ENCODE measurements at regions of chr2 and their contacts with region 1.

Region 1: DNA sequence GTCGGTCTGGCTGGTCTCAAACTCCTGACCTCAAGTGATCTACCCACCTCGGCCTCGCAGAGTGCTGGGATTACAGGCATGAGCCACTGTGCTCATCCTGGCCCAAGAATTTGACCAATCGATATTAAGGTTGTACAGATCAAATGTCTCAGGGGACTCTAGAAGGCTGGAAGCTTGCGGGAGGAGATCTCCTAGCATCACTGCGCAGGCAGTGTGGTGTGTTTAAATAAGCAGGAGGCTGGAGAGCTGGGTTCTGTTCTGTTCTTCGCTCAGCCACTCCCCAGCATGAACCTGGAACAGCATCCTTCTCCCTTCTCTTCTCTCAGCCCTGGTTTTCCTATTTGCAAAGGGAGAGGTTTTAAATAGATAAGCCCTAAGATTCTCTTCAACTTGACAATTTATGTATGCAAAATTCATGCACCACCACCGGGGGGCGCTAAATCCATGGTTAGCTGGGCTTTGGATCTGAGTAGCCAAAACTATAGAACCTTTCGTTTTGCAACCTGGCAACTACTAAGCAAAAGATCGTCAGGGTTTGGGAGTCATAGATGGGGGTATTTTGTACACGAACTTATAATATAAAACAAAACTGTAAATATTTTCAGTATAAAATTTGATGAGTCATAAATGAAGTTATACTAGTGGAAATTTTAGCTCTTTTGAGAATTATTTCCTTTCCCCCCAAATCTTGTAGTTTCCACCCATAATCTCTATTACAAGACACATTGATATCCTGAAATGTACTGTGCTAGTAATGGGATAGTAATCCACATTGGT is 60.6 kb downstream of the SLC16A14 start:
- DNase-seq: no peak
- H3K4me3 ChIP-seq: peak overlapping the region in 2 of 4 donors; percentile 16 to 39
- H3K27ac ChIP-seq: no peak overlapping the region
- H3K4me1 ChIP-seq: peaks cover 0 to 6% (median 3%) of the 10 kb centered on the region in 4 donors
- H3K27me3 ChIP-seq: no peaks in the 10 kb centered on the region
- CTCF ChIP-seq: peak; percentile 70 to 82 (median 73)
- EP300 ChIP-seq: no peak
- POLR2A ChIP-seq: no peak

Region 2: GRCh38 chr2:230160112-230160660 is 152.1 kb after region 1 on chr2:
- intact Hi-C with region 1: loop called (anchors 2 kb)
- DNase-seq: no peak
- H3K4me3 ChIP-seq: no peak overlapping the region
- H3K27ac ChIP-seq: no peak overlapping the region
- H3K4me1 ChIP-seq: peaks cover 0 to 6% (median 2%) of the 10 kb centered on the region in 4 donors
- H3K27me3 ChIP-seq: no peaks in the 10 kb centered on the region
- CTCF ChIP-seq: peak; percentile 59 to 74 (median 71)
- EP300 ChIP-seq: no peak
- POLR2A ChIP-seq: no peak

Region 3: GRCh38 chr2:230614913-230615332 is 606.8 kb after region 1 on chr2:
- intact Hi-C with region 1: loop called (anchors 5 kb)
- DNase-seq: peak; percentile 34
- H3K4me3 ChIP-seq: no peak overlapping the region
- H3K27ac ChIP-seq: no peak overlapping the region
- H3K4me1 ChIP-seq: peaks cover 0 to 5% (median 0%) of the 10 kb centered on the region in 4 donors
- H3K27me3 ChIP-seq: no peaks in the 10 kb centered on the region
- CTCF ChIP-seq: no peak
- EP300 ChIP-seq: no peak
- POLR2A ChIP-seq: no peak

Measured in esophagus muscularis mucosa (tissue), 4 donors.